B cell (primary cell): ENCODE measurements at regions of chr6 and their contacts with region 1.

Region 1: GRCh38 chr6:136643850-136644596 is 93.8 kb upstream of the MAP7 start:
- DNase-seq: peak; percentile 83
- ATAC-seq: peak; percentile 83
- H3K4me3 ChIP-seq: no peak overlapping the region
- H3K4me3 Mint-ChIP-seq: no peak overlapping the region
- H3K27ac ChIP-seq: no peak overlapping the region
- H3K27ac Mint-ChIP-seq: peak overlapping the region; percentile 29
- H3K4me1 ChIP-seq: peaks cover 7 to 10% of the 10 kb centered on the region in 2 donors
- H3K4me1 Mint-ChIP-seq: peaks cover 8% of the 10 kb centered on the region
- H3K27me3 ChIP-seq: no peaks in the 10 kb centered on the region
- H3K27me3 Mint-ChIP-seq: no peaks in the 10 kb centered on the region
- CTCF ChIP-seq: peak; percentile 94

Region 2: GRCh38 chr6:136471372-136471771 is 172.7 kb before region 1 on chr6:
- CTCF ChIA-PET with region 1: no interaction called
- POLR2A ChIA-PET with region 1: no interaction called
- intact Hi-C with region 1: no loop called
- DNase-seq: no peak
- ATAC-seq: no peak
- H3K4me3 ChIP-seq: no peak overlapping the region
- H3K4me3 Mint-ChIP-seq: no peak overlapping the region
- H3K27ac ChIP-seq: no peak overlapping the region
- H3K27ac Mint-ChIP-seq: no peak overlapping the region
- H3K4me1 ChIP-seq: no peaks in the 10 kb centered on the region
- H3K4me1 Mint-ChIP-seq: peaks cover 1% of the 10 kb centered on the region
- H3K27me3 ChIP-seq: no peaks in the 10 kb centered on the region
- H3K27me3 Mint-ChIP-seq: peaks cover 20% of the 10 kb centered on the region
- CTCF ChIP-seq: no peak

Region 3: GRCh38 chr6:136613477-136613876 is 30.5 kb before region 1 on chr6:
- CTCF ChIA-PET with region 1: interaction called, 11 read pairs
- POLR2A ChIA-PET with region 1: no interaction called
- intact Hi-C with region 1: no loop called
- DNase-seq: no peak
- ATAC-seq: no peak
- H3K4me3 ChIP-seq: no peak overlapping the region
- H3K4me3 Mint-ChIP-seq: no peak overlapping the region
- H3K27ac ChIP-seq: no peak overlapping the region
- H3K27ac Mint-ChIP-seq: no peak overlapping the region
- H3K4me1 ChIP-seq: no peaks in the 10 kb centered on the region
- H3K4me1 Mint-ChIP-seq: no peaks in the 10 kb centered on the region
- H3K27me3 ChIP-seq: no peaks in the 10 kb centered on the region
- H3K27me3 Mint-ChIP-seq: no peaks in the 10 kb centered on the region
- CTCF ChIP-seq: no peak

Region 4: GRCh38 chr6:136669299-136669699 is 25.3 kb after region 1 on chr6:
- CTCF ChIA-PET with region 1: interaction called, 12 read pairs
- POLR2A ChIA-PET with region 1: no interaction called
- intact Hi-C with region 1: no loop called
- DNase-seq: no peak
- ATAC-seq: no peak
- H3K4me3 ChIP-seq: no peak overlapping the region
- H3K4me3 Mint-ChIP-seq: no peak overlapping the region
- H3K27ac ChIP-seq: no peak overlapping the region
- H3K27ac Mint-ChIP-seq: no peak overlapping the region
- H3K4me1 ChIP-seq: no peaks in the 10 kb centered on the region
- H3K4me1 Mint-ChIP-seq: no peaks in the 10 kb centered on the region
- H3K27me3 ChIP-seq: no peaks in the 10 kb centered on the region
- H3K27me3 Mint-ChIP-seq: no peaks in the 10 kb centered on the region
- CTCF ChIP-seq: no peak

Region 5: GRCh38 chr6:136723780-136724179 is 79.8 kb after region 1 on chr6:
- CTCF ChIA-PET with region 1: interaction called, 29 read pairs
- POLR2A ChIA-PET with region 1: no interaction called
- intact Hi-C with region 1: no loop called
- DNase-seq: peak; percentile 57
- ATAC-seq: peak; percentile 94
- H3K4me3 ChIP-seq: no peak overlapping the region
- H3K4me3 Mint-ChIP-seq: peak overlapping the region; percentile 50
- H3K27ac ChIP-seq: peak overlapping the region in 1 of 2 donors; percentile 20
- H3K27ac Mint-ChIP-seq: peak overlapping the region; percentile 47
- H3K4me1 ChIP-seq: peaks cover 29 to 31% of the 10 kb centered on the region in 2 donors
- H3K4me1 Mint-ChIP-seq: peaks cover 48% of the 10 kb centered on the region
- H3K27me3 ChIP-seq: no peaks in the 10 kb centered on the region
- H3K27me3 Mint-ChIP-seq: no peaks in the 10 kb centered on the region
- CTCF ChIP-seq: no peak

Region 6: DNA sequence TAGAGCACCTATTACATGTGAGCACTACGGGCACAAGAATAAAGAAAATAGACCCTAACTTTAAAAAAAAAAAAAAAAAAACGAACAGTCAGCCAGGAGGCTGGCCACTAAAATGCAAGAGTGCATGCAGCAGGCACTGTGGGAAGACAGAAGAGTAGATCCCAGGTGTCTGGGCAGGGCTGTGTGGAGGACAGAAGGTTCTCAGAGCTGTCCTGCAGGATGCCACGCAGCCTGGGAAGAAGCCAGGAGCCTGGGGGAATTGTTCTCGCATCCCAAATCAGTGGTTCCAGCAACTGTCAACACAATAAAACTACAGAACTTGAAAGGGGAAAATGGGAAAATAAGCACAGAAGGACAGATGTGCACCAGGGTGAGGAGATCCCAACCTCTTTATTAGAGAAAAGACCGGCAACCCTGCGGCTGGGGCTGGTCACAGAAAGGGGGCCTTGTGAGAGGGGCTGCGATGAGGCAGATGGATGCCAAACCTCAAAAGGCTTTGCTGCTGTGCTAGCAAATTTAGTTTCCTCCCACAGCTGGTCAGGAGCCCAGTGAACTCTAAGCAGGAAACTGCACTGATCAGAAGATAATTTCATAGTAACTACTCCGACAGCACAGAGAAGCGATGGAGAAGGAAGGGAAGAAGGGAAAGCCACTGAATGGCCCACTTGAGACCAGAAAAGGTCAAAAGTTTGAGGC is 117.4 kb after region 1 on chr6:
- CTCF ChIA-PET with region 1: interaction called, 23 read pairs
- POLR2A ChIA-PET with region 1: interaction called, 7 read pairs
- intact Hi-C with region 1: no loop called
- DNase-seq: peak; percentile 21
- ATAC-seq: peak; percentile 22
- H3K4me3 ChIP-seq: peak overlapping the region; percentile 3 to 53 (median 19)
- H3K4me3 Mint-ChIP-seq: peak overlapping the region; percentile 74
- H3K27ac ChIP-seq: peak overlapping the region; percentile 84 to 91
- H3K27ac Mint-ChIP-seq: peak overlapping the region; percentile 85
- H3K4me1 ChIP-seq: peaks cover 61% of the 10 kb centered on the region in 2 donors
- H3K4me1 Mint-ChIP-seq: peaks cover 67% of the 10 kb centered on the region
- H3K27me3 ChIP-seq: no peaks in the 10 kb centered on the region
- H3K27me3 Mint-ChIP-seq: no peaks in the 10 kb centered on the region
- CTCF ChIP-seq: no peak

Region 7: GRCh38 chr6:136822376-136823127 is 178.5 kb after region 1 on chr6 and contains the start of gene PEX7:
- CTCF ChIA-PET with region 1: interaction called, 14 read pairs
- POLR2A ChIA-PET with region 1: no interaction called
- intact Hi-C with region 1: loop called (anchors 1 kb)
- DNase-seq: peak; percentile 94
- ATAC-seq: peak; percentile 91
- H3K4me3 ChIP-seq: peak within 1 kb of the TSS; percentile 45 to 87 (median 71)
- H3K4me3 Mint-ChIP-seq: peak within 1 kb of the TSS; percentile 90
- H3K27ac ChIP-seq: peak within 1 kb of the TSS; percentile 65 to 95
- H3K27ac Mint-ChIP-seq: peak within 1 kb of the TSS; percentile 91
- H3K4me1 ChIP-seq: peaks cover 11 to 12% of the 10 kb centered on the region in 2 donors
- H3K4me1 Mint-ChIP-seq: peaks cover 18% of the 10 kb centered on the region
- H3K27me3 ChIP-seq: peaks cover 0 to 3% (median 0%) of the 10 kb centered on the region in 4 experiments
- H3K27me3 Mint-ChIP-seq: peaks cover 9% of the 10 kb centered on the region
- CTCF ChIP-seq: peak; percentile 82
- total RNA-seq, gene PEX7: 3.9 and 6.6 TPM in 2 replicates